ENCODE measurements at regions of chr6 and their contacts with region 1.

Region 1: DNA sequence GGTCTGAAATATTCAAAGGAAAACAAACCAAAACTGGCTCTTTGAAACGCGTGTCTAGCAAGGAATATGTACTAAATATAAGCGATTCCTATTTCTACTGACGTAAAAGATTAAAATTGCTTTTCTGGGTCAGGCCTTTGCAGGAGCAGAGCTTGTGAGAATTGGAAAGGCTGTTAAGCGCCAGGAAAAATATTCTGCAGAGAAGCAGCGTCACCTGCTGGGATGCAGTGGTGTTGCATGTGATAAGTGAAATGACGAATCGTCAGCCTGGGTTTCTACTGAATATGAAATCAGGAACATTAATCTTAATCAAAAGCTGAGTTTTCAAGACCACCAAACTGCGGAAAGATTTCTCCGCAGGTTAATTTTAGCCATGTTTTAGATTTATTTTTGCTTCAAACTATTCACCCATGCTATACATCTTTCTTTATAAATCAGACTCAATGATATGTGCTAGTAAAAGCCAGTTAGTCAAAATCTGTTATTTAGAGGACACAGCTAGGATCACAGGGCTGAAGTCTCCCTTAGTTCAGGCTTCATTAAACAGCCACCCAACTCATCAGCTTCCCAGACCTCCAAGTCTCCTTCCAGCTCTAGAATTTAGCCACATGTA is 67.4 kb downstream of the ALDH8A1 start:
- DNase-seq: peak; percentile 63
- H3K4me3 ChIP-seq: no peak overlapping the region
- H3K27ac ChIP-seq: no peak overlapping the region
- H3K27me3 ChIP-seq: no peaks in the 10 kb centered on the region
- CTCF ChIP-seq: peak; percentile 99

Region 2: GRCh38 chr6:134145786-134146185 is 736.7 kb before region 1 on chr6:
- CTCF ChIA-PET with region 1: interaction called, 13 read pairs
- POLR2A ChIA-PET with region 1: no interaction called
- DNase-seq: no peak
- H3K4me3 ChIP-seq: no peak overlapping the region
- H3K27ac ChIP-seq: peak overlapping the region; percentile 47
- H3K27me3 ChIP-seq: no peaks in the 10 kb centered on the region
- CTCF ChIP-seq: no peak

Region 3: DNA sequence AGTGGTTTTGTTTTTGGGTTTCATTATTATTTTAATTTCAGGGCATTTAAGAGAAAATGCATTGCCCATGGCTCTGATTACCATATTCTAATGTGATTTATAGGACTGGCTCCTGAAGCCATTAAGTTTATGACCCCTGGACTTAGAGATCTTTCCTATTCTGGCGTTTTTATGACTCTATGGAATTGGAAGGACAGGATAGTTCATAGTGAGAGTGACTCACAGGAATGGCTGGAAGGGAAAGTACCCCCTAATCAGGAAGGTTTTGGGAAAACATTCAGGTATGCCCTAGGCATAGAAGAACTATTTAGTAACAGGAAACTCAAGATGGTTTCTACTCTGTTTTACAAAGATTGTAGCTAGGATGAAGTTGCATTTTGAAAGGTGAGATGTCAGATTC is 721.5 kb before region 1 on chr6:
- CTCF ChIA-PET with region 1: interaction called, 69 read pairs
- POLR2A ChIA-PET with region 1: no interaction called
- DNase-seq: no peak
- H3K4me3 ChIP-seq: no peak overlapping the region
- H3K27ac ChIP-seq: no peak overlapping the region
- H3K27me3 ChIP-seq: no peaks in the 10 kb centered on the region
- CTCF ChIP-seq: no peak

Region 4: GRCh38 chr6:134822920-134823709 is 59.4 kb before region 1 on chr6:
- CTCF ChIA-PET with region 1: interaction called, 15 read pairs
- POLR2A ChIA-PET with region 1: interaction called, 4 read pairs
- DNase-seq: peak; percentile 66
- H3K4me3 ChIP-seq: no peak overlapping the region
- H3K27ac ChIP-seq: no peak overlapping the region
- H3K27me3 ChIP-seq: no peaks in the 10 kb centered on the region
- CTCF ChIP-seq: peak; percentile 95

Region 5: GRCh38 chr6:134853111-134854055 is 29.1 kb before region 1 on chr6:
- CTCF ChIA-PET with region 1: interaction called, 11 read pairs
- POLR2A ChIA-PET with region 1: no interaction called
- DNase-seq: no peak
- H3K4me3 ChIP-seq: no peak overlapping the region
- H3K27ac ChIP-seq: peak overlapping the region; percentile 40
- H3K27me3 ChIP-seq: no peaks in the 10 kb centered on the region
- CTCF ChIP-seq: no peak

Region 6: GRCh38 chr6:134894800-134895199 is 12.3 kb after region 1 on chr6:
- CTCF ChIA-PET with region 1: interaction called, 11 read pairs
- POLR2A ChIA-PET with region 1: no interaction called
- DNase-seq: no peak
- H3K4me3 ChIP-seq: no peak overlapping the region
- H3K27ac ChIP-seq: no peak overlapping the region
- H3K27me3 ChIP-seq: no peaks in the 10 kb centered on the region
- CTCF ChIP-seq: no peak

Region 7: GRCh38 chr6:135062735-135063134 is 180.2 kb after region 1 on chr6:
- CTCF ChIA-PET with region 1: no interaction called
- POLR2A ChIA-PET with region 1: no interaction called
- DNase-seq: no peak
- H3K4me3 ChIP-seq: no peak overlapping the region
- H3K27ac ChIP-seq: no peak overlapping the region
- H3K27me3 ChIP-seq: peaks cover 2% of the 10 kb centered on the region
- CTCF ChIP-seq: no peak

Region 8: DNA sequence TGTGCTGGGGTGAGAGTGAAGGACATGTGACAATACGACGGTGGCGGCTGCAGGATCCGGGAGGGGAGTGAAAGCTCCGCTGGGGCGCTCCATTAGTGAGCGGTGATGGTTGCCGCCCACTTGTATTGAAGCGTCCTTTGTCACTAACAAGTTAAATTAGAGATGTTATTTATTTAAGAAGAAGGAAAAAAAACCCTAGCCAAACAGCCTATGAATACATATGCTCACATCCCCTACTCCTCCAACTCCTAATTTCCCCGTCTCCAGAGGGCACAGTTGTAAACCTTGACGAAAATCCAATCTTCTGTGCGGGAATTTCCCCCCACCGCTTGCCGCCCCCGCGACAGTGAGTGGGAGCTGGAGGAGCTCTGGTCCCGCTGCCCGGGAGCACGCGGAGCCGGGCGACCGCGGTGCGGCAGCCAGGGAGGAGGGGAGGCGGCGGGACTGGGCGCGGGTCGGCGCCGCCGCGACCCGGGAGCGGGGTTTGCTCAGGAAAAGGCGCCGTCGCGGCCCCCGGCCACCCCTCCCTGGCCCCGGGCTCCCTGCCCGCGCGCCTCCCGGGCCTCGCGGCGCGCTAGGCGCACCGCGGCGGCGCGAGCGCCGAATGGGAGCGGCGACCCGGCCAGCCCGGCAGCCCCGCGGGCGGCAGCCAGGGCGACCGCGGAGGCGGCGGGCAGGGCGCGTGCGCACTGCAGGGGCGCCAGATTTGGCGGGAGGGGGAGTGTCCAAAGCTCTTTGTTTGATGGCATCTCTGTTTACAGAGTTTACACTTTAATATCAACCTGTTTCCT is 298.2 kb after region 1 on chr6 and contains the start of gene MYB:
- CTCF ChIA-PET with region 1: no interaction called
- POLR2A ChIA-PET with region 1: no interaction called
- DNase-seq: no peak
- H3K4me3 ChIP-seq: peak within 1 kb of the TSS; percentile 64
- H3K27ac ChIP-seq: no peak within 1 kb of the TSS
- H3K27me3 ChIP-seq: peaks cover 19% of the 10 kb centered on the region
- CTCF ChIP-seq: no peak
- polyA plus RNA-seq, gene MYB: 0.09 and 0.10 TPM in 2 replicates

Measured in AG04450 (cell line).